Activated T-helper 2 cell treated with anti-CD3 and anti-CD28 coated beads, Interferon-gamma antibody, Interleukin-2, Interleukin-4, amounts not matched to agents 10 μg/mL and 5 μg/mL and 100 μg/mL, durations not matched to agents 14 hours and 24 hours and 36 hours (primary cell): ENCODE measurements at regions of chr5 and their contacts with region 1.

Region 1: GRCh38 chr5:140401362-140402257 is at the start of gene ANKHD1:
- DNase-seq: peak; percentile 97
- H3K4me3 Mint-ChIP-seq: no peak within 1 kb of the TSS
- H3K27ac Mint-ChIP-seq: no peak within 1 kb of the TSS
- H3K4me1 Mint-ChIP-seq: peaks cover 20% of the 10 kb centered on the region
- H3K27me3 Mint-ChIP-seq: no peaks in the 10 kb centered on the region
- total RNA-seq, gene ANKHD1: 119 and 120 TPM in 2 replicates

Region 2: GRCh38 chr5:140113699-140114263 is 287.8 kb before region 1 on chr5 and contains the start of gene PURA:
- intact Hi-C with region 1: loop called (anchors 2 kb)
- DNase-seq: peak; percentile 94
- H3K4me3 Mint-ChIP-seq: peak within 1 kb of the TSS; percentile 92
- H3K27ac Mint-ChIP-seq: peak within 1 kb of the TSS; percentile 85
- H3K4me1 Mint-ChIP-seq: peaks cover 50% of the 10 kb centered on the region
- H3K27me3 Mint-ChIP-seq: peaks cover 25% of the 10 kb centered on the region
- total RNA-seq, gene PURA: 10.8 and 11.0 TPM in 2 replicates

Region 3: GRCh38 chr5:140372971-140373487 is 28.6 kb before region 1 on chr5:
- intact Hi-C with region 1: no loop called
- DNase-seq: no peak
- H3K4me3 Mint-ChIP-seq: no peak overlapping the region
- H3K27ac Mint-ChIP-seq: no peak overlapping the region
- H3K4me1 Mint-ChIP-seq: peaks cover 5% of the 10 kb centered on the region
- H3K27me3 Mint-ChIP-seq: no peaks in the 10 kb centered on the region

Region 4: DNA sequence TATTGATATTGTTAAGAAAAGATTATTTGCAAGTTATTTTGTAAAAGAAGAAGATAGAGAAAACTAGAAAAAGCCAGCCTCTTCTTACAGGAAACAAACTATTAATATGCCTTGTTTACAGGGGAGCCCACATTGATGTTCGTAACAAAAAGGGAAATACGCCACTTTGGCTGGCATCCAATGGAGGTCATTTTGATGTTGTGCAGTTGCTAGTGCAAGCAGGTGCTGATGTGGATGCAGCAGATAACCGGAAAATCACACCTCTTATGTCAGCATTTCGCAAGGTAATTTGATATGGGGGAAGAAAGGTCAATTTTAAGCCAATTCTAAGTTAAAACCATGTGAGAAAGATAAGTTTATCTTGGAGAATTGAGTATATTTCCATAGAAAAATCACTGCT is 108.3 kb after region 1 on chr5:
- intact Hi-C with region 1: no loop called
- DNase-seq: no peak
- H3K4me3 Mint-ChIP-seq: no peak overlapping the region
- H3K27ac Mint-ChIP-seq: no peak overlapping the region
- H3K4me1 Mint-ChIP-seq: no peaks in the 10 kb centered on the region
- H3K27me3 Mint-ChIP-seq: no peaks in the 10 kb centered on the region

Region 5: GRCh38 chr5:140564196-140565023 is 162.8 kb after region 1 on chr5 and contains the starts of genes APBB3 and SLC35A4:
- intact Hi-C with region 1: loop called (anchors 1 kb)
- DNase-seq: peak; percentile 97
- H3K4me3 Mint-ChIP-seq: peak within 1 kb of the TSS; percentile 96
- H3K27ac Mint-ChIP-seq: peak within 1 kb of the TSS; percentile 95
- H3K4me1 Mint-ChIP-seq: peaks cover 33% of the 10 kb centered on the region
- H3K27me3 Mint-ChIP-seq: no peaks in the 10 kb centered on the region
- total RNA-seq, gene APBB3: 15.1 and 17.9 TPM in 2 replicates
- total RNA-seq, gene SLC35A4: 91.9 and 97.3 TPM in 2 replicates

Region 6: DNA sequence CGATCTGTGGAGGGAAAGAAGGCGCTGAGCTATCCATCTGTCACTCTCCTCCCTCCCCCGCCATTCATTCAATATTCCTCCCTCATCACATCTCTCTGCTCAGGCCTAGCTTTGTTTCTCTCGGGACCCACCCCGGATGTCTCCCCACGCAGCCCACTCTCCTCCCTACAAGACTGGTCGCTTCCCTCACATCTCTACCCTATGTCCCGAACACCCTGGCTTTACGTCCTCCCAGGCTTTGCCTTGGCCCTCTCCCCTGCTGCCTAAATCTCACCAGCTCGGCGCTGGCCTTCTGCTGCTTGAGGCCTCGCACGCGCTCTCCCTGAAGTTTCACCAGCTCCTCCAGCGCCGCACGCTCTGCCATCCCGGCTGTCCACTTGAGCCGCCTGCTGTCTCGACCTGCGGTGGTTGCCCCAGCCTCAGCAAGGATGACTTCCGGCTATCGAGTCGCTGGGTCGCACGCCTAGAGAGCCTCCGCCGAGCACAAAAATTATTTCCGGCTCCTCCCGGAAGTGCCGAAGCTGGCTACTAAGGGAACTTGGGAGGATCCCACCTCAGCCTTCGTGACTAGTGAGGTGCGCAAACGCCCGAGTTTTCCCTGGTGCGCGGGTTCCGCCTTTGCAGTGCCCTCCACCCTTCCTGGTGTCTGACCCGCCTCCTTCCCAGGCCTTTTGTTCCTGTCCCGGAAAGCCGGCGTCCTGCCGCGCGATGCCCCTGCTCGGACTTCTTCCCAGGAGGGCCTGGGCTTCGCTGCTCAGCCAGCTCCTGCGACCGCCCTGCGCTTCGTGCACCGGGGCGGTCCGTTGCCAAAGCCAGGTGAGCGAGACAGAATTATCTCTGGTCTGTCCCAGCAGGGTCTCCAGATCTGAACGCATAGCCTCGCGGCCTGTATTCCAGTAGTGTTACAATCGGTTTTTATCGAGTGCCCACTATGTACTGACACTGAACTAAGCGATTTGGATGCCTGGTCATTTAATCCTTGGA is 289.6 kb after region 1 on chr5 and contains the starts of genes HARS1 and HARS2:
- intact Hi-C with region 1: loop called (anchors 2 kb)
- DNase-seq: peak; percentile 79
- H3K4me3 Mint-ChIP-seq: peak within 1 kb of the TSS; percentile 97
- H3K27ac Mint-ChIP-seq: peak within 1 kb of the TSS; percentile 91
- H3K4me1 Mint-ChIP-seq: peaks cover 20% of the 10 kb centered on the region
- H3K27me3 Mint-ChIP-seq: no peaks in the 10 kb centered on the region
- total RNA-seq, gene HARS1: 107 and 110 TPM in 2 replicates
- total RNA-seq, gene HARS2: 28.0 and 30.1 TPM in 2 replicates